Thyroid gland (tissue), 4 donors: ENCODE measurements at regions of chr1 and their contacts with region 1.

Region 1: DNA sequence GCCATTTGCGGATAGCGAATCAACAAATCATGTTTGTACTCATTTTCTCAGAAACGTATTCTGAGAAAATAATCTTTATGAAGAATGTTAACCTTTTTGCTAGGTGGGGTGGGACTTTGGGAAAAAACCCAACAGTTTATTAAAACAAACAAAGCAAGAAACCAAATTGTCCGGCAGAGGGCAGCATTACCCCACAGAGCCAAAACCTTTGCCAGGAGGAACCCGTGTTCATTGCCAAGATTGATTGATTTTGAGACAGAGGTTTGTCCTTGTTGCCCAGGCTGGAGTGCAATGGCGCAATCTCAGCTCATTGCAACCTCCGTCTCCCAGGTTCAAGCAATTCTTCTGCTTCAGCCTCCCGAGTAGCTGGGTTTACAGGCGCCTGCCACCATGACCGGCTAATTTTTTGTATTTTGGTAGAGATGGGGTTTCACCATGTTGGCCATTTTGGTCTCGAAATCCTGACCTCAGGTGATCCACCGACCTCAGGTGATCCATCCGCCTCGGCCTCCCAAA is 70.8 kb upstream of the RHOU start:
- DNase-seq: peak; percentile 76 to 85
- H3K4me3 ChIP-seq: no peak overlapping the region
- H3K27ac ChIP-seq: no peak overlapping the region
- H3K4me1 ChIP-seq: no peaks in the 10 kb centered on the region
- H3K27me3 ChIP-seq: no peaks in the 10 kb centered on the region
- CTCF ChIP-seq: peak; percentile 40 to 88 (median 84)
- POLR2A ChIP-seq: no peak

Region 2: DNA sequence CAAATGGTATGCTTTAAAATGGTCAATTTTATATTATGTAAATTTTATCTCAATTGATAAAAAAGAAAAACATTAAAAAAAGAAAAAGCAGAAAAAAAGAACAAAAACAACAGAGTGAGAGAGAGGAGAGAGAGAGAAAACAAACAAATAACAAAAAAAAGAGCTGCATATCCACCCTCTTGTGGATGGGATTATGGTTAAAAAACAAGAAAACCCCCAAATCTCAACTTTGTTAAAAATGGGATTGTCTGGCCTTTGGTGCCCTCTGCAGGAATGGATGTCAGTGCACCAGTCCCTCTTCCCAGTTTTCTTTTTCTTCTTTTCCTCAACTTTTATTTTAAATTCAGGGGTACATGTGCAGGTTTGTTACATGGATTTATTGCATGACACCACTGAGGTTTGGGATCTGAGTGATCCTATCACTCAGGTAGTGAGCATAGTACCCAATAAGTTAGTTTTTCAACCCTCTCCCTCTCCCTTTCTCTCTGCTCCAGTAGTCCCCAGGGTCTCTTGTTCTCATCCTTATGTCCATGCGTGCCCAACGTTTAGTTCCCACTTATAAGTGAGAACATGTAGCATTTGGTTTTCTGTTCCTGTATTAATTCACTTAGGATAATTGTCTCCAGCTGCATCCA is 149.1 kb before region 1 on chr1:
- intact Hi-C with region 1: no loop called
- DNase-seq: peak in 1 of 2 donors; percentile 23
- H3K4me3 ChIP-seq: no peak overlapping the region
- H3K27ac ChIP-seq: no peak overlapping the region
- H3K4me1 ChIP-seq: no peaks in the 10 kb centered on the region
- H3K27me3 ChIP-seq: no peaks in the 10 kb centered on the region
- CTCF ChIP-seq: peak; percentile 12 to 88 (median 62)
- POLR2A ChIP-seq: no peak

Region 3: DNA sequence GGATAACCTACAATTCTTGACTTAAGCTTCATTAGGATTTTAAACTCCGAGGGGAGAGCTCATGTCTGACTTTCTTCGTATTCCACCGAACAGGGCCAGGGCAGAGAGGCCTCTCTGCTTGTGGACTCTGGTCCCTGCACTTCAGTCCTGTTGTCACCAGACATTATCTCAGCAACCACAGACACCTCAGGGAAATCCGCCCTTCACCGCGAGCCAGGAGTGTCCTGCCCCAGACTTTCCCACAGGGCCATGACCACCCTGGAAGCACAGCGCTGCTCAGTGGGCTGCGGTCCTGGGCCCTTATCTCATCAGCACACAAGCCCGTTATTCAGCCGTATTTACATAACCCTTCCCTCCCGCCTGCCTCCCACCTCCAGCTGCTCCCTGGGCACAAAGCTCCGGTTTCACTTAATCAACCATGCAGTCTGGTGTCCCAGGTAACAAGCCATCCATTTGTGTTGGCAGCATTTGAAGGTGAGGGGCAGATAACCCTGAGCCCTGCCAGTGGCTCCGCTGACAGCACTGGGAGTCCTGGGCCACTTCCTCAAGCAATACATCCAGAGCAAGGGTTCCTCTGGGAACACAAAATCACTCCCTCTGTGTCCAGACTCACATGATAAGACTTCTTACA is 483.7 kb after region 1 on chr1:
- intact Hi-C with region 1: no loop called
- DNase-seq: peak; percentile 42 to 55
- H3K4me3 ChIP-seq: no peak overlapping the region
- H3K27ac ChIP-seq: peak overlapping the region in 1 of 3 donors; percentile 28
- H3K4me1 ChIP-seq: peaks cover 18 to 25% of the 10 kb centered on the region in 2 donors
- H3K27me3 ChIP-seq: no peaks in the 10 kb centered on the region
- CTCF ChIP-seq: no peak
- POLR2A ChIP-seq: no peak

Region 4: GRCh38 chr1:229479660-229480399 is 815.4 kb after region 1 on chr1:
- intact Hi-C with region 1: loop called (anchors 10 kb)
- DNase-seq: peak; percentile 15 to 18
- H3K4me3 ChIP-seq: no peak overlapping the region
- H3K27ac ChIP-seq: no peak overlapping the region
- H3K4me1 ChIP-seq: no peaks in the 10 kb centered on the region
- H3K27me3 ChIP-seq: no peaks in the 10 kb centered on the region
- CTCF ChIP-seq: no peak
- POLR2A ChIP-seq: no peak